PC-9 (cell line): ENCODE measurements at regions of chr12 and their contacts with region 1.

Region 1: DNA sequence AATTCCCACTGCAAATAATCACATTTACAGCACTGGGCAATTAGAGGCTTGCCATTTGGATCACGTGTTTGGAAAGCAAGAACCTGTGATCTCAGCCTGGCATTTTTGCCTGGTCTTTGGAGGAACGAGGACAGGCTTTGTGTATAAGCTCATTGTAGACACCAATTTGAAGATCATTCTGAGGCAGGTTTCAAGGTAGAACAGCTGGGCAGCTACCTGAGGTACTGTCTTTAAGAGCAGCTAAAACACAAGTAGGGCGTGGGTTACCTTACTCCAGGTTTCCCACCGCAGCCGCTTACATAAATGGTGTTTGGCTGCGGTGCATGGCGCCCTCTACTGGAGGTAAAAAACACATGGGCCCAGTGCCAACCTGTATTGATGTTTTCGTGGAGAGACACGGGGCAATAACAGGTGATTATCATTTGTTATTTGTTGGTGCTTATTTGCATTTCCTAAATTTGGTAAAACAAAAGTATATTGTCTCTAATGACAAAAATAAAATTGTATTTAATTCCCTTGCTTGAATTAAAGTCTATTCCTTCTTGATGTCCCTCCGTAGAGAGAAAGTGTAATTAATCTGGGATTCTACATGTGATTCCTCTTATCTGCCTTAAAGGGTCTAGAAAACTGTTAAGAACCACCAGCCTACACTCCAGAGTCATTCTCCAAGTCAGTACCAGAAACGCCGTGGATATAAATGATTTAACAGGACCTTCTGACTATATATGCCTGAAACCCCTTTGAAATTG is 69.7 kb downstream of the SVOP start:
- DNase-seq: peak; percentile 41 to 73
- H3K4me3 ChIP-seq: no peak overlapping the region
- H3K27ac ChIP-seq: no peak overlapping the region
- H3K4me1 ChIP-seq: no peaks in the 10 kb centered on the region
- H3K27me3 ChIP-seq: peaks cover 30% of the 10 kb centered on the region
- CTCF ChIP-seq: peak; percentile 97

Region 2: GRCh38 chr12:108169708-108170107 is 781.5 kb before region 1 on chr12:
- CTCF ChIA-PET with region 1: no interaction called
- POLR2A ChIA-PET with region 1: no interaction called
- intact Hi-C with region 1: no loop called
- DNase-seq: no peak
- H3K4me3 ChIP-seq: no peak overlapping the region
- H3K27ac ChIP-seq: no peak overlapping the region
- H3K4me1 ChIP-seq: no peaks in the 10 kb centered on the region
- H3K27me3 ChIP-seq: peaks cover 14% of the 10 kb centered on the region
- CTCF ChIP-seq: no peak

Region 3: GRCh38 chr12:108803428-108804105 is 147.6 kb before region 1 on chr12:
- CTCF ChIA-PET with region 1: no interaction called
- POLR2A ChIA-PET with region 1: no interaction called
- intact Hi-C with region 1: loop called (anchors 2 kb)
- DNase-seq: peak; percentile 58 to 65
- H3K4me3 ChIP-seq: no peak overlapping the region
- H3K27ac ChIP-seq: no peak overlapping the region
- H3K4me1 ChIP-seq: no peaks in the 10 kb centered on the region
- H3K27me3 ChIP-seq: no peaks in the 10 kb centered on the region
- CTCF ChIP-seq: peak; percentile 94

Region 4: DNA sequence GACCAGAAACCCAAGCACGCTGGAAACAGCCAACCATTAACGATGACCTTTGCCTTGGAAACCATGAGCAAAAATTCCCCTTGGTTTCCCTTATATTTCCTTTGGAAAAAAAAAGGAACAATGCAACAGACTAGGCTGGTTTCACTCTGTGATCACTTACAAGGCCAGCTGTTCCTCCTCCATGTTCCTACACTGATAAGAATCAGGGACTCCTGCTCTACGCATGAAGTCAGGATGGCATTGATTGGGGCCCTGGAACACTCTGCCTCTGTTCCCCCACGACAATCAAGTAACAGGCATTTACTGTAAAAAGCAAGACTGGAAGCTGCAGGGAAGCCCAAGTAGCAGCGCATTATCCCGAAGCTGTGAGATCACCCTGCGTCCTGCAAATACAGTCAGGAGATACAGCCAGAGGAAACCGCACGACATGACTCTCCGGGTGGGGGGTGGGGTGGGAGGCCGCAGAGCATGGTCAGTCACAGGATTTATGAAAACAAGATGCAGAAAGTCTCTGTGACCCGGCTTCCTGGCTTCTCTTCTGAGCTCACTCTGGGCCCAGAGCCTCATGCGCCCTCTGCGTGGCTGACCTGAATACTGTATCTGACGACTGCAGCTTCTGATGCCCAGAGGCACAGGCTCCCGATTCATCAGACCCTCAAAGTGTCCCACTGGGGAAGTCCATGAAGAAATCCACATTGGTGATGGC is 124.9 kb before region 1 on chr12:
- CTCF ChIA-PET with region 1: no interaction called
- POLR2A ChIA-PET with region 1: no interaction called
- intact Hi-C with region 1: no loop called
- DNase-seq: no peak
- H3K4me3 ChIP-seq: no peak overlapping the region
- H3K27ac ChIP-seq: no peak overlapping the region
- H3K4me1 ChIP-seq: peaks cover 15% of the 10 kb centered on the region
- H3K27me3 ChIP-seq: no peaks in the 10 kb centered on the region
- CTCF ChIP-seq: no peak

Region 5: DNA sequence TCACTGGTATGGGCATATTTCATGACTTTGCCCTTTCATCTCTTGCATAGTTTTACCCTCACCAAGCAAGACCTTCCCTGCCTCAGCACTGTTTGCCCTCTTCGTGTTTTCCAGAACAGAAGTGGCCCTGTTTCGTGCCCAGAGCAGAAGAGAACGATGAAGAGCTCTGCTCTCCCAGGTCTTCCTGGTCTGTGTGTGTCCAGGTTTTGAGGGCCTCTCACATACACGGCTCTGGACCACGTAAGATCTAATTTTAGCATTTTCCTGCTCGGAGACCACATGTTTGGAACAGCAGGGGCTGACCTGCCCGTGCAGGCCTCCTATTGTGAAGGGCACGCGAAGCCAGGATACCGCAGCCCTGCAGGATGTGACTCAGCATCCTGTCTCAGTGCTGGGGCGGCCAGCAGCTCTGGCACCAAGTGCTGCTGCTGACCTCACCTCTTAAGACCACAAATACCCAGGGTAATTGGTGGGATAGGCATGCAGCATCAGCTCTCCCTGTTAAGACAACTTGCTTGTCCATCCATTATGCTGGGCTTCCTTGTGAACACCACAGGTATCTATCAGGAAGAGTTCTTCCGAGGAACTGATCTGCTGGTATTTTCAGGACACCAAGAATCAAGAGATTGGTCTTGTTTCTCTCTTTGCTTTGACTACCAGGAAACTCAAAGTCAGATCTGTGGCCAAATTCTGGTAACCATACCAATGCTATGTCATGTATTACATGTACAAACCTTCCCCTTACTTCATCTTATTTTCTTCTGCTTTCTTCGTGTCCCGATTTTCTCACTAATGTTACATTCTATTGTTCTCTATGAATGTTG is 112.8 kb before region 1 on chr12:
- CTCF ChIA-PET with region 1: no interaction called
- POLR2A ChIA-PET with region 1: interaction called, 5 read pairs
- intact Hi-C with region 1: loop called (anchors 2 kb)
- DNase-seq: peak; percentile 93 to 98
- H3K4me3 ChIP-seq: peak overlapping the region; percentile 22; the same call in 1 of the 2 replicates
- H3K27ac ChIP-seq: peak overlapping the region; percentile 92
- H3K4me1 ChIP-seq: peaks cover 44% of the 10 kb centered on the region
- H3K27me3 ChIP-seq: no peaks in the 10 kb centered on the region
- CTCF ChIP-seq: no peak

Region 6: GRCh38 chr12:108884116-108885012 is 66.8 kb before region 1 on chr12:
- CTCF ChIA-PET with region 1: interaction called, 5 read pairs
- POLR2A ChIA-PET with region 1: no interaction called
- intact Hi-C with region 1: loop called (anchors 1 kb)
- DNase-seq: peak in 1 of 2 experiments; percentile 20
- H3K4me3 ChIP-seq: no peak overlapping the region
- H3K27ac ChIP-seq: no peak overlapping the region
- H3K4me1 ChIP-seq: no peaks in the 10 kb centered on the region
- H3K27me3 ChIP-seq: no peaks in the 10 kb centered on the region
- CTCF ChIP-seq: peak; percentile 79

Region 7: GRCh38 chr12:108907476-108908351 is 43.5 kb before region 1 on chr12:
- CTCF ChIA-PET with region 1: no interaction called
- POLR2A ChIA-PET with region 1: no interaction called
- intact Hi-C with region 1: loop called (anchors 2 kb)
- DNase-seq: peak; percentile 61 to 79
- H3K4me3 ChIP-seq: no peak overlapping the region
- H3K27ac ChIP-seq: no peak overlapping the region
- H3K4me1 ChIP-seq: peaks cover 27% of the 10 kb centered on the region
- H3K27me3 ChIP-seq: no peaks in the 10 kb centered on the region
- CTCF ChIP-seq: no peak

Region 8: GRCh38 chr12:109084425-109084824 is 133.3 kb after region 1 on chr12:
- CTCF ChIA-PET with region 1: no interaction called
- POLR2A ChIA-PET with region 1: no interaction called
- intact Hi-C with region 1: no loop called
- DNase-seq: no peak
- H3K4me3 ChIP-seq: no peak overlapping the region
- H3K27ac ChIP-seq: no peak overlapping the region
- H3K4me1 ChIP-seq: no peaks in the 10 kb centered on the region
- H3K27me3 ChIP-seq: no peaks in the 10 kb centered on the region
- CTCF ChIP-seq: no peak